Sigmoid colon (tissue), 7 donors: ENCODE measurements at regions of chr1 and their contacts with region 1.

Region 1: GRCh38 chr1:202348509-202349205 is at the start of gene PPP1R12B:
- DNase-seq: peak; percentile 99
- H3K4me3 ChIP-seq: peak within 1 kb of the TSS; percentile 64 to 100 (median 96)
- H3K27ac ChIP-seq: peak within 1 kb of the TSS; percentile 84 to 96 (median 90)
- H3K4me1 ChIP-seq: peaks cover 0 to 21% (median 14%) of the 10 kb centered on the region in 4 donors
- H3K27me3 ChIP-seq: no peaks in the 10 kb centered on the region
- CTCF ChIP-seq: no peak
- EP300 ChIP-seq: no peak
- POLR2A ChIP-seq: peak in 1 of 2 donors; percentile 53
- total RNA-seq, gene PPP1R12B: 493 to 995 (median 807) TPM

Region 2: GRCh38 chr1:202247894-202248681 is 100.6 kb before region 1 on chr1:
- intact Hi-C with region 1: no loop called
- DNase-seq: peak; percentile 50
- H3K4me3 ChIP-seq: no peak overlapping the region
- H3K27ac ChIP-seq: no peak overlapping the region
- H3K4me1 ChIP-seq: no peaks in the 10 kb centered on the region
- H3K27me3 ChIP-seq: peaks cover 0 to 5% (median 0%) of the 10 kb centered on the region in 3 donors
- CTCF ChIP-seq: no peak
- EP300 ChIP-seq: no peak
- POLR2A ChIP-seq: no peak

Region 3: DNA sequence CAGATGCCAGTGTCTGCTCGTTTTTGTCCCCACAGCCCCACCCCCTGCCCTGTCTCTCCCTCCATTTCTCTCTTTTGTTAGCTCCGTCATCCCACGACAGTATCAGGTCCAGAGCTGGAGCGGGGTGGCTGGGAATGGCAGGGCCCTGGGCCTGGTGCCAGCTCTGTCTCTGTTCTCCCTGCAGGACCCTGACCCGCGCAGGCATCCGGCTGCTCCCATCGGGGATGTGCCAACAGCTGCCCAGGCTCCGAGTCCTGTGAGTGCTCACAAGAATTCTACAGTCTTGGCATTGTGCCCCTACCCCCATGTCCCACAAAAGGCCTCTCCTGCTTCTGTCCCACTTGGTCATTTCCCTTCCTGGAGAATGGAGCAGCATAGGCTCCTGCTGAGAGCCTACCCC is 44.3 kb before region 1 on chr1:
- intact Hi-C with region 1: no loop called
- DNase-seq: no peak
- H3K4me3 ChIP-seq: no peak overlapping the region
- H3K27ac ChIP-seq: no peak overlapping the region
- H3K4me1 ChIP-seq: no peaks in the 10 kb centered on the region
- H3K27me3 ChIP-seq: no peaks in the 10 kb centered on the region
- CTCF ChIP-seq: no peak
- EP300 ChIP-seq: no peak
- POLR2A ChIP-seq: no peak

Region 4: GRCh38 chr1:202405928-202406327 is 57.3 kb after region 1 on chr1:
- intact Hi-C with region 1: loop called (anchors 5 kb)
- DNase-seq: no peak
- H3K4me3 ChIP-seq: no peak overlapping the region
- H3K27ac ChIP-seq: no peak overlapping the region
- H3K4me1 ChIP-seq: peaks cover 0 to 41% (median 29%) of the 10 kb centered on the region in 4 donors
- H3K27me3 ChIP-seq: no peaks in the 10 kb centered on the region
- CTCF ChIP-seq: no peak
- EP300 ChIP-seq: no peak
- POLR2A ChIP-seq: no peak

Region 5: GRCh38 chr1:202547215-202547614 is 198.6 kb after region 1 on chr1:
- intact Hi-C with region 1: no loop called
- DNase-seq: no peak
- H3K4me3 ChIP-seq: peak overlapping the region in 3 of 4 donors; percentile 58 to 60 (median 58)
- H3K27ac ChIP-seq: peak overlapping the region; percentile 68 to 94 (median 86)
- H3K4me1 ChIP-seq: peaks cover 0 to 70% (median 53%) of the 10 kb centered on the region in 4 donors
- H3K27me3 ChIP-seq: no peaks in the 10 kb centered on the region
- CTCF ChIP-seq: no peak
- EP300 ChIP-seq: no peak
- POLR2A ChIP-seq: no peak

Region 6: DNA sequence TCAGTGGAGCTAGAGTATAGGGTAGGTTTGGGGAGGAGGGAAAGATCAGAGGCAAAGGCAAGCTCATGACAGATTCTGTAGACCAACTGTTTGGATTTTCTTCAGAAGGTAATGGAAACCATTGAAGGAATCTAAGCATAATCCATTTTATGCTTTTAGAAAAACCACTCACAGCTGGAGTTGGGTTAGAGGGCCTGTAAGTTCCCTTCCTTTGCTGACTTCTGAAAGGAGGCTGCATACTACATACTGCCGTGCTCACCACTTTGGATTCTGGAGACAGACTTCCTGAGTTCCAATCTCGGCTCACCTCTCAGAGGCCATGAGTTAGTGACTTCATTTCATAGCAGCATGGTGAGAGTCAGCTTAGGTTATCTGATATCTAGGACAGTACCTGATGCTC is 368.0 kb after region 1 on chr1:
- intact Hi-C with region 1: loop called (anchors 5 kb)
- DNase-seq: no peak
- H3K4me3 ChIP-seq: no peak overlapping the region
- H3K27ac ChIP-seq: no peak overlapping the region
- H3K4me1 ChIP-seq: no peaks in the 10 kb centered on the region
- H3K27me3 ChIP-seq: peaks cover 0 to 12% (median 0%) of the 10 kb centered on the region in 3 donors
- CTCF ChIP-seq: no peak
- EP300 ChIP-seq: no peak
- POLR2A ChIP-seq: no peak